GM12878 (cell line): ENCODE measurements at regions of chr20 and their contacts with region 1.

Region 1: GRCh38 chr20:45044084-45044573 is 56.8 kb downstream of the KCNS1 start:
- DNase-seq: no peak
- ATAC-seq: peak; percentile 88
- H3K4me3 ChIP-seq: no peak overlapping the region
- H3K27ac ChIP-seq: no peak overlapping the region
- H3K4me1 ChIP-seq: no peaks in the 10 kb centered on the region
- H3K27me3 ChIP-seq: no peaks in the 10 kb centered on the region
- CTCF ChIP-seq: peak; percentile 83 to 89 (median 83)
- EP300 ChIP-seq: no peak
- POLR2A ChIP-seq: no peak
- RAD21 ChIP-seq: peak; percentile 91

Region 2: GRCh38 chr20:44979090-44979621 is 65.0 kb before region 1 on chr20:
- CTCF ChIA-PET with region 1: interaction called, 14 read pairs
- POLR2A ChIA-PET with region 1: no interaction called
- RAD21 ChIA-PET with region 1: no interaction called
- SMC1A ChIA-PET with region 1: no interaction called
- in situ Hi-C with region 1: no loop called
- intact Hi-C with region 1: no loop called
- DNase-seq: peak; percentile 82
- ATAC-seq: peak; percentile 95
- H3K4me3 ChIP-seq: 0 out of 2 replicates have a peak overlapping the region, but pooled peaks have one; percentile 27
- H3K27ac ChIP-seq: peak overlapping the region; percentile 89
- H3K4me1 ChIP-seq: peaks cover 17% of the 10 kb centered on the region
- H3K27me3 ChIP-seq: no peaks in the 10 kb centered on the region
- CTCF ChIP-seq: no peak
- EP300 ChIP-seq: peak; percentile 65 to 66; a peak in 3 of 4 replicates
- POLR2A ChIP-seq: no peak
- RAD21 ChIP-seq: no peak

Region 3: GRCh38 chr20:45028424-45029136 is 15.5 kb before region 1 on chr20:
- CTCF ChIA-PET with region 1: interaction called, 11 read pairs
- POLR2A ChIA-PET with region 1: interaction called, 3 read pairs
- RAD21 ChIA-PET with region 1: no interaction called
- SMC1A ChIA-PET with region 1: interaction called, 5 read pairs
- in situ Hi-C with region 1: no loop called
- intact Hi-C with region 1: no loop called
- DNase-seq: no peak
- ATAC-seq: no peak; the same call in 1 of the 3 replicates
- H3K4me3 ChIP-seq: no peak overlapping the region
- H3K27ac ChIP-seq: no peak overlapping the region
- H3K4me1 ChIP-seq: peaks cover 5% of the 10 kb centered on the region; the same call in 1 of the 2 replicates
- H3K27me3 ChIP-seq: no peaks in the 10 kb centered on the region
- CTCF ChIP-seq: no peak
- EP300 ChIP-seq: no peak
- POLR2A ChIP-seq: no peak
- RAD21 ChIP-seq: no peak

Region 4: DNA sequence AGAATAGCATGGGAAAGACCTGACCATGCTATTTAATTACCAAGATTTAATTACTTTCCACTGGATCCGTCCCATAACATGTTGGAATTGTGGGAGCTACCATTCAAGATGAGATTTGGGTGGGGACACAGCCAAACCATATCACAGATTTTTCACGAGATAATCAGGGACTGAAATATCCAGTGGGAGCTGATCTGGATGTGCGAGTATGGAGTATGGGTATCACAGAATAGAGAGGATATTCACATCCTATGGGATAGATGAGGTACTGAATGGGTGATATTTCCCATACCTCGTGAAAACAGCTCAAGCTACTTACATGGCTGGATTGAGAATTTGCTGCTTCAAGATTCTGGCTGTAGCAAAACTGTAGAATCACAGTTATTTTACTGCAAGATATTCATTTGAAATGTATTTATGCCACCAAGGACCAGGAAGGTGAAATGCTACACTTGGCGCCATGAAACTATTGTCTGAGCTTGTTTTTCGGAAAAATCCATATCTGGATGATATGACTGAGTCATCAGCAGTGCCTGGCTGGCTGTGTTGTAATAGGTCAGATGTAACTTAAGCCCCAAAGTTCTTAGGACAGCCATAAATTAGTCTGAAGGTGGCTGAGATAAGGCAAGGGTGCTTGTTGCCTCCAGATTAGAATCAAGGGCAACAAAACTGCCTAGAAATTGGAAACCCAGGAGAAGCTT is 27.0 kb after region 1 on chr20:
- CTCF ChIA-PET with region 1: interaction called, 20 read pairs
- POLR2A ChIA-PET with region 1: no interaction called
- RAD21 ChIA-PET with region 1: interaction called, 5 read pairs
- SMC1A ChIA-PET with region 1: interaction called, 8 read pairs
- in situ Hi-C with region 1: no loop called
- intact Hi-C with region 1: no loop called
- DNase-seq: no peak
- ATAC-seq: no peak
- H3K4me3 ChIP-seq: no peak overlapping the region
- H3K27ac ChIP-seq: no peak overlapping the region
- H3K4me1 ChIP-seq: no peaks in the 10 kb centered on the region
- H3K27me3 ChIP-seq: no peaks in the 10 kb centered on the region
- CTCF ChIP-seq: no peak
- EP300 ChIP-seq: no peak
- POLR2A ChIP-seq: no peak
- RAD21 ChIP-seq: no peak

Region 5: DNA sequence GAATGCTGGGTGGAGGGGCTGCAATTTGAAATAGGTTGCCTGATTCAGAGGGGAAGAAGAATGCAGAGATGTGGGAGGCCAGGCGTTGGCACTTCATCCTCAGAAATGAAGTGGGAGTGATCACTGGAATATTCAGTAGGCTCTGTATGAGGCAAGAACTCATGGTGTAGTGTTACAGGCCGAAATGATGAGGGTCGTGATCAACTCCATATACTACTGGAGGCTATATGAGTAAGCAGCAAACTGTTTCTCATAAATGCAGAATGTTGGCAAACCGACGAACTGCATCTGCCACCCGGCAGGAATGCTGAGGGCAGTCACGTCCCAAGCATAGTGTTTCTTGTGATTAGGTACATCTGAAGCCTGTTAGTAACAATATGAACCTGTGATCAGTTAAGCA is 44.1 kb after region 1 on chr20:
- CTCF ChIA-PET with region 1: interaction called, 162 read pairs
- POLR2A ChIA-PET with region 1: no interaction called
- RAD21 ChIA-PET with region 1: interaction called, 47 read pairs
- SMC1A ChIA-PET with region 1: interaction called, 108 read pairs
- in situ Hi-C with region 1: no loop called
- intact Hi-C with region 1: no loop called
- DNase-seq: no peak
- ATAC-seq: no peak
- H3K4me3 ChIP-seq: no peak overlapping the region
- H3K27ac ChIP-seq: no peak overlapping the region
- H3K4me1 ChIP-seq: no peaks in the 10 kb centered on the region
- H3K27me3 ChIP-seq: no peaks in the 10 kb centered on the region
- CTCF ChIP-seq: no peak
- EP300 ChIP-seq: no peak
- POLR2A ChIP-seq: no peak
- RAD21 ChIP-seq: no peak

Region 6: GRCh38 chr20:45104786-45105185 is 60.7 kb after region 1 on chr20:
- CTCF ChIA-PET with region 1: interaction called, 67 read pairs
- POLR2A ChIA-PET with region 1: no interaction called
- RAD21 ChIA-PET with region 1: interaction called, 7 read pairs
- SMC1A ChIA-PET with region 1: interaction called, 25 read pairs
- in situ Hi-C with region 1: no loop called
- intact Hi-C with region 1: no loop called
- DNase-seq: no peak
- ATAC-seq: no peak; the same call in 2 of the 3 replicates
- H3K4me3 ChIP-seq: no peak overlapping the region
- H3K27ac ChIP-seq: no peak overlapping the region
- H3K4me1 ChIP-seq: no peaks in the 10 kb centered on the region
- H3K27me3 ChIP-seq: peaks cover 4 to 5% of the 10 kb centered on the region in 2 experiments
- CTCF ChIP-seq: no peak
- EP300 ChIP-seq: no peak
- POLR2A ChIP-seq: no peak
- RAD21 ChIP-seq: no peak

Region 7: GRCh38 chr20:45153752-45154151 is 109.6 kb after region 1 on chr20:
- CTCF ChIA-PET with region 1: no interaction called
- POLR2A ChIA-PET with region 1: no interaction called
- RAD21 ChIA-PET with region 1: no interaction called
- SMC1A ChIA-PET with region 1: no interaction called
- in situ Hi-C with region 1: no loop called
- intact Hi-C with region 1: no loop called
- DNase-seq: peak; percentile 15
- ATAC-seq: peak; percentile 60
- H3K4me3 ChIP-seq: no peak overlapping the region
- H3K27ac ChIP-seq: no peak overlapping the region
- H3K4me1 ChIP-seq: peaks cover 3% of the 10 kb centered on the region
- H3K27me3 ChIP-seq: no peaks in the 10 kb centered on the region
- CTCF ChIP-seq: no peak
- EP300 ChIP-seq: no peak
- POLR2A ChIP-seq: no peak
- RAD21 ChIP-seq: no peak

Region 8: GRCh38 chr20:45293041-45294002 is 249.2 kb after region 1 on chr20:
- CTCF ChIA-PET with region 1: interaction called, 17 read pairs
- POLR2A ChIA-PET with region 1: no interaction called
- RAD21 ChIA-PET with region 1: interaction called, 5 read pairs
- SMC1A ChIA-PET with region 1: interaction called, 6 read pairs
- in situ Hi-C with region 1: no loop called
- intact Hi-C with region 1: loop called (anchors 5 kb)
- DNase-seq: no peak
- ATAC-seq: peak; percentile 93
- H3K4me3 ChIP-seq: peak overlapping the region; percentile 30; the same call in 1 of the 2 replicates
- H3K27ac ChIP-seq: no peak overlapping the region
- H3K4me1 ChIP-seq: no peaks in the 10 kb centered on the region
- H3K27me3 ChIP-seq: peaks cover 6 to 7% of the 10 kb centered on the region in 2 experiments; a peak in 3 of 4 replicates
- CTCF ChIP-seq: peak; percentile 83 to 96 (median 89)
- EP300 ChIP-seq: no peak
- POLR2A ChIP-seq: no peak
- RAD21 ChIP-seq: peak; percentile 25; the same call in 1 of the 2 replicates